ENCODE measurements at regions of chr21 and their contacts with region 1.

Region 1: DNA sequence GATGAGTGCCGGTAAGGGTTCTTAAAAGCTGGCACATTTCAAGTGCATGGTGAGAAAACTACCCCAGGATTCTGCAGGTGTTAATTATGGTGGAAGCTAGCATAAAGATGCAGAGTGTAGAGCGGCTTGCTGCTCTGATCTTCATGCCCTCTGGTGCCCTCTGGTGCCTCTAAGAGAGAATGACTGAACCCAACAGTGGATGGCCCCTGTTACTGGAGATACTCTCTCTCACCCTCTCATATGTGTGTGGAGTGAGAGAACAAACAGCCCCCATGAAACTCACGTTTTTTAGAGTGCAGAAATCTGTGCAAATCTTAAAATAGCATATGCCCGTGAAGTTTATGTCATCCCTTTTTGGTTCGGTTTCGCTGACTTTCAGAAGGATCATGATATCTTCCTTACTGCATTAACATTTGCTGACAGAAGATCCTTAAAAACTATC is 90.0 kb downstream of the GRIK1 start:
- DNase-seq: no peak
- ATAC-seq: peak; percentile 98
- H3K4me3 ChIP-seq: no peak overlapping the region
- H3K27ac ChIP-seq: no peak overlapping the region
- H3K4me1 ChIP-seq: no peaks in the 10 kb centered on the region
- H3K27me3 ChIP-seq: no peaks in the 10 kb centered on the region
- CTCF ChIP-seq: peak; percentile 74

Region 2: GRCh38 chr21:29477941-29478340 is 371.8 kb before region 1 on chr21:
- intact Hi-C with region 1: loop called (anchors 10 kb)
- DNase-seq: no peak
- ATAC-seq: no peak
- H3K4me3 ChIP-seq: no peak overlapping the region
- H3K27ac ChIP-seq: no peak overlapping the region
- H3K4me1 ChIP-seq: peaks cover 11% of the 10 kb centered on the region
- H3K27me3 ChIP-seq: no peaks in the 10 kb centered on the region
- CTCF ChIP-seq: no peak

Region 3: GRCh38 chr21:29626801-29627470 is 222.8 kb before region 1 on chr21:
- intact Hi-C with region 1: no loop called
- DNase-seq: no peak
- ATAC-seq: no peak
- H3K4me3 ChIP-seq: no peak overlapping the region
- H3K27ac ChIP-seq: no peak overlapping the region
- H3K4me1 ChIP-seq: no peaks in the 10 kb centered on the region
- H3K27me3 ChIP-seq: no peaks in the 10 kb centered on the region
- CTCF ChIP-seq: no peak

Region 4: DNA sequence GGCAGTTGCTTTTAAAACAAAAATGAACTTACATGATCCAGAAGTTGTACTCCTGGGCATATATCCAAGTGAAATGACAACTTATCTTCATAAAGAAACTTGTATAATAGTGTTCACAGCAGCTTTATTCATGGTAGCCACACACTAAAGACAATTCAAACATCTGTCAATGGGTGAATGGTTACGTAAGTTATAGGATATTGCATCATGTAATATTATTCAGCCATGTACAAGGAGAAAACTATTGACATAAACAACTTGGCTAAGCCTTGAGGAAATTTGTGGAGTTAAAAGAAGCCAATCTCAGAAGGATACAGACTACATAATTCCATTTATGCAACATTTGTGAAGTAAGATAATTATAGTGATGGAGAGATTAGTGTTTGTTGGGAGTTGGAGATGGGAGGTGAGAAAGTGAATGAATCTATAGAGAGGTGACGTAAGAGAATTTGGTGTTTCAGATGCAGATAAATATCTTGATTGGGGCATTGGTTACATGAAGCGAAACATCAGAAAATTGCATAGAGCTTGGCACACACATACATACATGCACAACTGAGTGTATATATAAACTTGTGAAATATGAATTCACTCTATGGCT is 140.0 kb after region 1 on chr21:
- intact Hi-C with region 1: no loop called
- DNase-seq: no peak
- ATAC-seq: no peak
- H3K4me3 ChIP-seq: no peak overlapping the region
- H3K27ac ChIP-seq: no peak overlapping the region
- H3K4me1 ChIP-seq: no peaks in the 10 kb centered on the region
- H3K27me3 ChIP-seq: no peaks in the 10 kb centered on the region
- CTCF ChIP-seq: no peak

Region 5: GRCh38 chr21:30027986-30028385 is 178.2 kb after region 1 on chr21:
- intact Hi-C with region 1: no loop called
- DNase-seq: no peak
- ATAC-seq: no peak
- H3K4me3 ChIP-seq: no peak overlapping the region
- H3K27ac ChIP-seq: no peak overlapping the region
- H3K4me1 ChIP-seq: no peaks in the 10 kb centered on the region
- H3K27me3 ChIP-seq: no peaks in the 10 kb centered on the region
- CTCF ChIP-seq: no peak

Region 6: GRCh38 chr21:30126576-30126975 is 276.8 kb after region 1 on chr21:
- intact Hi-C with region 1: no loop called
- DNase-seq: no peak
- ATAC-seq: no peak
- H3K4me3 ChIP-seq: no peak overlapping the region
- H3K27ac ChIP-seq: no peak overlapping the region
- H3K4me1 ChIP-seq: no peaks in the 10 kb centered on the region
- H3K27me3 ChIP-seq: no peaks in the 10 kb centered on the region
- CTCF ChIP-seq: no peak